ENCODE measurements at regions of chr22 and their contacts with region 1.

Region 1: DNA sequence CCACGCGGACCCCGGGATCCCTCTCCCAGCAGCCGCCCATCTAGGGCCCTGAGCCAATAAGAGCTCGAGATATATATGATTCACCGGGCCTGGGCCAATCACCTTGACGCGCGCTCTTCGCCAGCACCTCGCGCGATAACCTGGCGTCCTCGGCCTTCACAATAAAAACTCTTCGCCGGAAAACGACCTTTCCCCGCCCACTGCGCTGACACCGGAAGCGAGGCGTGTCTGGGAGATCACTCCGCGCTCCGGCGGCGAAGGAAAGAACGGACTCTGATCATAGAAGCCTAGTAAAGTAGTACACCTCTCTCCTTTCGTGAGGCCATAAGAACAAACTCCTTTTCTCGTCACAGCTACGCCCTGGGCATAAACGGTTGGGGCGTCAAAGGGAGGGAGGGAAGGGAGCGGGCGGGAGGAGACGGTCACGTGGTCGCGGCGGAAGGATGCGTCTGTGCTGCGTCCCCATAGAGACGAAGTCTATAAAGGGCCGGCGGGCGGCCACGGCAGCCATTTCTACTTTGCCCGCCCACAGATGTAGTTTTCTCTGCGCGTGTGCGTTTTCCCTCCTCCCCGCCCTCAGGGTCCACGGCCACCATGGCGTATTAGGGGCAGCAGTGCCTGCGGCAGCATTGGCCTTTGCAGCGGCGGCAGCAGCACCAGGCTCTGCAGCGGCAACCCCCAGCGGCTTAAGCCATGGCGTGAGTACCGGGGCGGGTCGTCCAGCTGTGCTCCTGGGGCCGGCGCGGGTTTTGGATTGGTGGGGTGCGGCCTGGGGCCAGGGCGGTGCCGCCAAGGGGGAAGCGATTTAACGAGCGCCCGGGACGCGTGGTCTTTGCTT is at the start of gene ATF4:
- DNase-seq: peak; percentile 99
- H3K4me3 ChIP-seq: peak within 1 kb of the TSS; percentile 84 to 90
- H3K27ac ChIP-seq: peak within 1 kb of the TSS; percentile 98 to 99
- H3K4me1 ChIP-seq: peaks cover 5 to 53% (median 44%) of the 10 kb centered on the region in 4 donors
- H3K27me3 ChIP-seq: no peaks in the 10 kb centered on the region
- CTCF ChIP-seq: no peak

Region 2: GRCh38 chr22:39152511-39153219 is 367.6 kb before region 1 on chr22 and contains the start of gene CBX7:
- intact Hi-C with region 1: loop called (anchors 5 kb)
- DNase-seq: peak; percentile 96 to 98
- H3K4me3 ChIP-seq: peak within 1 kb of the TSS; percentile 76 to 89
- H3K27ac ChIP-seq: peak within 1 kb of the TSS; percentile 93 to 99
- H3K4me1 ChIP-seq: peaks cover 0 to 48% (median 39%) of the 10 kb centered on the region in 4 donors
- H3K27me3 ChIP-seq: no peaks in the 10 kb centered on the region
- CTCF ChIP-seq: no peak

Region 3: GRCh38 chr22:39170825-39171622 is 349.2 kb before region 1 on chr22:
- intact Hi-C with region 1: loop called (anchors 10 kb)
- DNase-seq: peak; percentile 70 to 88
- H3K4me3 ChIP-seq: no peak overlapping the region
- H3K27ac ChIP-seq: no peak overlapping the region
- H3K4me1 ChIP-seq: peaks cover 10 to 38% (median 33%) of the 10 kb centered on the region in 4 donors
- H3K27me3 ChIP-seq: no peaks in the 10 kb centered on the region
- CTCF ChIP-seq: peak; percentile 92 to 97

Region 4: DNA sequence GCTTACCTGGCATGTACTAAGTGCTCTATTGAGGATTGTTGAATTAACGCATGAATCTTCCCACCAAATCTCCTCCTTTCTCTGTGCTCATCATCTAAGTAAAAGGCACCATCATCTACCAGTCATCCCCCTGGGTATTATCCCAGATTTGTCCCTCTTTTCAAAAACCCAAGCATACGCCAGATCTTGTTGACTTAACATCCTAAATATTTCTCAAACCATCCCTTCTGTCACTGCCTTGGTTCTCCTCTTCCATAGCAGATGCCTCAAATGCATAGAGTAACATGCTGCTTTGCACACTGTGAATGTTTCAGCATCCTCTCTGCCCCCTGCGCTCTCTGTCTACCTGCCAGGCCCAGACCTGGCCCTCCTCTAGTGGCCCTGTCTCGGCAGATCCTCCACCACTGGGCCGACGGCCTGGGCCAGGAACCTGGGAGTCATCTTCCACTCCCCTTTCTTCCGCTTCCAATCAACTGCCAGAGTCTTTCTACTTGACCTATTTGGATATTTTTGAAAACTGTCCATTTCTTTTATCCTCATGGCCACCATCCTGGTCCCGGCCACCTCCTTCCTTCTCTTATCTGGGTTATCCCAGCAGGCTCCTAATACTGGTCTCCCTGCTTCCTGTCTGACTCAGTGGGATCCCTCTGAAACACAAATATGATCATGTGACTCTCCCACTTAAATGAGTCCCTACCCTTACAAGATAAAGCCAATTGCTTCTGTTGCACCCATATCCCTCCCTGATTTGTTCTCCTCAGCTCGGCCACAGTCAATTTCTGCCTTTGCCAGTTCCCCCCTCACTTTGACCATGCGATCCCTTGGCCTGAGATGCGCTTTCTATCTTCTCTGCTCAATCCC is 124.1 kb before region 1 on chr22:
- intact Hi-C with region 1: loop called (anchors 5 kb)
- DNase-seq: no peak
- H3K4me3 ChIP-seq: no peak overlapping the region
- H3K27ac ChIP-seq: no peak overlapping the region
- H3K4me1 ChIP-seq: peaks cover 0 to 15% (median 9%) of the 10 kb centered on the region in 4 donors
- H3K27me3 ChIP-seq: no peaks in the 10 kb centered on the region
- CTCF ChIP-seq: no peak

Region 5: DNA sequence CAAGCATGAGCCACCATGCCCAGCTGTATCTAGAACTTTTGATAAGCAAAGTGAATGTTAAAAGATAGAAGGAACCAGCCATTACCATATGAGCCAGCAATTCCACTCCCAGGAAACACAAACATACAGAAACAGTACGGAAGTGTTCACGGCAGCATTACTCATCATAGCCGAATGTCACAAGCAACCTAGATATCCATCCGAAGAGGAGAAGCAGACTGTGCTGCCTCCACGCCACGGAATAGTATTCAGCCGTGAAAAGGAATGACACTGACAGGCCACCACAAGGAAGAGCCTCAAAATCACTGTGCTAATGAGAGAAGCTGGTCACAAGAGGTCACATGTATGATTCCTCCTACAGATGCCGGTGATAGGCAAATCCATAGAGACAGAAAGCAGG is 81.1 kb before region 1 on chr22:
- intact Hi-C with region 1: loop called (anchors 10 kb)
- DNase-seq: no peak
- H3K4me3 ChIP-seq: no peak overlapping the region
- H3K27ac ChIP-seq: no peak overlapping the region
- H3K4me1 ChIP-seq: peaks cover 0 to 19% (median 6%) of the 10 kb centered on the region in 4 donors
- H3K27me3 ChIP-seq: peaks cover 0 to 27% of the 10 kb centered on the region in 2 donors
- CTCF ChIP-seq: no peak